HepG2 (cell line): ENCODE measurements at regions of chr9 and their contacts with region 1.

Region 1: DNA sequence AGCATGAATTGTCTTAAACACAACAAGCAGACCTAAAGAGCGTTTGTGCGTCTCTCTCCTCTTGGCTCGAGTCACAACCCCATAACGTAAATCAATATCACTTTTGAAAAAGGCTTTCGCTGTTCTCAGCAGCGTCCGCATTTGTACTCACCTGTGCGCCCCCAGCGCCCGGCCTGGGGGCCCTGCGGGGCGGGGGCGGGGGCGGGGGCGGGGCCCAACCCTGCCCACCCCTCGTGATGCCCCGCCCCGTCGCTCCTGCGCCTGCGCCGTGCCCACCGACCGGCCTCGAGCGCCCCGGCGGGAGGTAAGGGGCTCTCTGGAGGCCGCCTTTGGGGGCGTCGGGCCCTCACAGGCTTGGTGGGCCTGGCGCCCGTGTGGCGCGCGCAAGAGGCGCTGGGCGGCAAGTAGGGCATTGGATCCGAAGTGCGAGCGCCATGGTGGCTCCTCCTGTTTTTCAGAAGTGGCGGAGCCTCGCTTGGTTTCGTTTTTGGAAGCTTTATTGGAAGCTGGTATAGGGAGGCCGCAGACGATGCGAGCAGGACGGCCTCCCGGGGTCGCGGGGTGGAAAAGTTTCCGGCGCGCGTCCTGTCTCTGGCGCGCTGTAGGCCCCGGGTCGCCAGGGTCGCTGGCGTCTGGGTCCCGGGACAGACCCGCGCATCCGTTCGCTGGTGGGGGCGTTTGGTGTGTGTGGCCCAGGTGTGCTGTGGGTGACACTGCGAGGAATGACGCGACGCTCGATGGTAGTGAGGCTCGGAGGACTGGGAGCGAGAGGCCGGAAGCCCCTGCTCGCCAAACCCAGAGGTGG is at the start of gene STX17:
- DNase-seq: peak; percentile 61
- ATAC-seq: peak; percentile 92
- H3K4me3 ChIP-seq: peak within 1 kb of the TSS; percentile 80 to 96 (median 83)
- H3K27ac ChIP-seq: peak within 1 kb of the TSS; percentile 92
- H3K4me1 ChIP-seq: peaks cover 21% of the 10 kb centered on the region
- H3K27me3 ChIP-seq: no peaks in the 10 kb centered on the region; a peak in 1 of 5 replicates
- CTCF ChIP-seq: peak; percentile 22
- EP300 ChIP-seq: no peak
- POLR2A ChIP-seq: peak; percentile 75 to 80; a peak in 3 of 4 replicates
- RAD21 ChIP-seq: peak; percentile 10; the same call in 1 of the 2 replicates
- total RNA-seq, gene STX17: 25.7 and 28.9 TPM in 2 replicates

Region 2: GRCh38 chr9:100098887-100099721 is 192.5 kb after region 1 on chr9 and contains the starts of genes ERP44 and INVS:
- CTCF ChIA-PET with region 1: no interaction called
- POLR2A ChIA-PET with region 1: interaction called, 4 read pairs
- in situ Hi-C with region 1: no loop called
- intact Hi-C with region 1: loop called (anchors 2 kb)
- DNase-seq: peak; percentile 98
- ATAC-seq: peak; percentile 96
- H3K4me3 ChIP-seq: peak within 1 kb of the TSS; percentile 81 to 100 (median 99)
- H3K27ac ChIP-seq: peak within 1 kb of the TSS; percentile 90
- H3K4me1 ChIP-seq: peaks cover 31% of the 10 kb centered on the region
- H3K27me3 ChIP-seq: peaks cover 0 to 5% of the 10 kb centered on the region in 2 experiments; a peak in 1 of 5 replicates
- CTCF ChIP-seq: peak; percentile 19
- EP300 ChIP-seq: no peak
- POLR2A ChIP-seq: peak; percentile 83 to 89
- RAD21 ChIP-seq: 0 out of 2 replicates have a peak, but pooled peaks have one; percentile 20
- total RNA-seq, gene ERP44: 7.4 and 13.8 TPM in 2 replicates
- total RNA-seq, gene INVS: 16.3 and 17.1 TPM in 2 replicates